ENCODE measurements at regions of chr17 and their contacts with region 1.

Region 1: DNA sequence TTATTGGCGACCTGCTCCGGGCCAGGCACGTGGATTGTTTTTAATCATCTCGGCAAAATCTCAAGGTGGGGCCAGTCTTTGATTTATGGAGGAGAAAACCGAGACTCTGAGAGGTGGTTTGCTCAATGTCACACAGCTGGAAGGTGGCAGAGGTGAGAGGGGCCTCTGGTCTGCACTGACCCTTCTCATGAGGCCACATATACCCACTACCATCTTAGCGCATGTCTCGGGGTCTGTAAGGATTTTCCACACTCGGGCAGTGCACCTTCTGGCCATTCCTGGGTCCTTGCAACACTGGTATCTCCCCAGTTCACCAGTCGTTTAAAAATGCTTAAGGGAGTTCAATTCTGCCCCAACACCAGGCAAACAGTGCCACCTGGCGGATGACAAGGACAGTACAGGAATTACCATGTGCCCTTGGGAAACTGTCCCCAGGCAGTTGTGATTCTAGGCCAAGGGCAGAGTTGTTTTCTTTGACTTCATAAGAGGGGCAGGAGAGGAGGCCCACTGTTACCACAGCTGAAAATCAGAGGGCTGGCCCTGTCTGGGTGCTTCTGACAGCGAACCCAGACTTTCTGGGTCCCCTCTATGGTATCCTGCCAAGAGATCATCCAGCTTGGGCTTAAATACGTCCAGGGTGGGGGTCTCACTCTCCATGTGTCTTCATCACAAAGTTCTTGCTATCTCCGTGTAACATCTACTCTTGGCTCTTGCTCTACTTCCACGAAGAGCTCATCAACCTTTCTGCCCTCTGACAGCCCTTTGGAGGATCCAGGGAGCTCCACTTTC is 39.4 kb upstream of the RAI1 start:
- DNase-seq: peak; percentile 67
- ATAC-seq: peak; percentile 94
- H3K4me3 Mint-ChIP-seq: no peak overlapping the region
- H3K27ac Mint-ChIP-seq: no peak overlapping the region
- H3K4me1 Mint-ChIP-seq: no peaks in the 10 kb centered on the region
- H3K27me3 Mint-ChIP-seq: peaks cover 4% of the 10 kb centered on the region
- CTCF ChIP-seq: peak; percentile 70

Region 2: GRCh38 chr17:17001874-17002520 is 639.8 kb before region 1 on chr17:
- CTCF ChIA-PET with region 1: no interaction called
- POLR2A ChIA-PET with region 1: no interaction called
- intact Hi-C with region 1: loop called (anchors 5 kb)
- DNase-seq: peak; percentile 76
- ATAC-seq: peak; percentile 97
- H3K4me3 Mint-ChIP-seq: no peak overlapping the region
- H3K27ac Mint-ChIP-seq: no peak overlapping the region
- H3K4me1 Mint-ChIP-seq: peaks cover 4% of the 10 kb centered on the region
- H3K27me3 Mint-ChIP-seq: no peaks in the 10 kb centered on the region
- CTCF ChIP-seq: peak; percentile 92

Region 3: GRCh38 chr17:17440010-17440843 is 201.6 kb before region 1 on chr17:
- CTCF ChIA-PET with region 1: no interaction called
- POLR2A ChIA-PET with region 1: no interaction called
- intact Hi-C with region 1: loop called (anchors 1 kb)
- DNase-seq: peak; percentile 57
- ATAC-seq: peak; percentile 86
- H3K4me3 Mint-ChIP-seq: no peak overlapping the region
- H3K27ac Mint-ChIP-seq: no peak overlapping the region
- H3K4me1 Mint-ChIP-seq: no peaks in the 10 kb centered on the region
- H3K27me3 Mint-ChIP-seq: peaks cover 4% of the 10 kb centered on the region
- CTCF ChIP-seq: no peak

Region 4: DNA sequence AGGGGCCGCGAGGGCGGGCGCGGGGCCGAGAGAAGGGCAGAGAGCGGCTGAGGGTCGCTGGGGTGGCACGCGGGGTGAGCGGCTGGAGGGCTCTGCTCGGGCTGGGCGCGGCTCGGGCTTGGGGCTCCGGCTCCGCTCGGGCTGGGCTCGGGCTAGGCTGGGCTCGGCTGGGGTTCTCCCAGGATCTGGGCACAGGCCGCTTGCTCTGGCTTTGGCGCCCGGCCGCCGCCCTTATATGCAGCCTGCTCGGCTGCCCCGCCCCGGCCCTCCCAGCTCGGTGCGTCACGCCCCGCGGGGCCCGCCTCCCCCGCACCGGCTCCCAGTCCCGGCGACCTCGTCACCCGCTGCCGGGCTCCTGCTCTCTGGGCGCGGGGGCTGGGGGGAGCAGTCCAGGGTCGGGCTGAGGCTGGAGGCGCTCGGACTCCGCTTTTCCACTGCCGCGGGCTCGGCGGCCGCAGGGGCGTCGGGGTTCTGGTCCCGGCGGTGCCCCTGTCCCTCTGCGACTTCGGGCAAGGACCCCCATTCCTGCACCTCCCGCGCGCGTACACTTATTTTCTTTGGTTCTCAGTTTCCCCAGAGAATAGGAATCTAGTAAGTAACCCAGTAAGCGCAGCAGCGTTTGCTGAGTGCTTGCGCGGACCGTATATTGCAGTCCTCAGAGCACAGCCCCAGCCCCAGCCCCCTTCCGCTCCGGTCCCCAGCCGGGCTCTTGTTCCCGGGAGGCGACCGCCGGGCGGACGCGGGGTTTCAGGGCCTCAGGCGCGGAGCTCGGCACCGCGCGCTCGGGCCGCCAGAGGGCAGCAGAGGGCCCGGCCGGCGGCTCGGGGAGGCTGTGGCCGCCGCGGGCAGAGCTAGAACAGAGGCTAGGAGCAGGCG is 145.4 kb before region 1 on chr17 and contains the start of gene RASD1:
- CTCF ChIA-PET with region 1: interaction called, 65 read pairs
- POLR2A ChIA-PET with region 1: no interaction called
- intact Hi-C with region 1: loop called (anchors 1 kb)
- DNase-seq: peak; percentile 81
- ATAC-seq: peak; percentile 88
- H3K4me3 Mint-ChIP-seq: peak within 1 kb of the TSS; percentile 80
- H3K27ac Mint-ChIP-seq: no peak within 1 kb of the TSS
- H3K4me1 Mint-ChIP-seq: peaks cover 17% of the 10 kb centered on the region
- H3K27me3 Mint-ChIP-seq: peaks cover 8% of the 10 kb centered on the region
- CTCF ChIP-seq: peak; percentile 67
- total RNA-seq, gene RASD1: 0.86 and 1.0 TPM in 2 replicates

Region 5: DNA sequence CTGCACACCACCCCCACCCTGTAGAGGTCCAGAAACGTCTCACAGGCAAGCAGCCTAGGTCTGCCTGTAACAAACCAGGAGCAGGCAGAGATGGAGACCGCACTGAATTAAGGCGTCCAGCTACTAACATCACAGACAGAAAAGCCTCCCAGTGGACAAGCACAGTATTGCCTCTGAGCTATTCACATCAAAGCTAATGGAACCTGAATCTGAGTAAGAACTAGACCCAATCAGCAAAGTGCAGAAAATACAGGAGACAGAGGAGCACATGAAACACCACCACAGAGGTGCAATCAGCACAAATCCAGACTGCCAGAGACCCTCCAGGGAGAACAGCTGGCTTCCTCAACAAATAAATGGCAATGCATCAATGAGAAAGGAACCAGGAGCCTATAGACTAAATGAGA is 28.1 kb before region 1 on chr17:
- CTCF ChIA-PET with region 1: interaction called, 12 read pairs
- POLR2A ChIA-PET with region 1: no interaction called
- intact Hi-C with region 1: no loop called
- DNase-seq: no peak
- ATAC-seq: peak; percentile 91
- H3K4me3 Mint-ChIP-seq: no peak overlapping the region
- H3K27ac Mint-ChIP-seq: no peak overlapping the region
- H3K4me1 Mint-ChIP-seq: peaks cover 2% of the 10 kb centered on the region
- H3K27me3 Mint-ChIP-seq: peaks cover 3% of the 10 kb centered on the region
- CTCF ChIP-seq: no peak

Region 6: DNA sequence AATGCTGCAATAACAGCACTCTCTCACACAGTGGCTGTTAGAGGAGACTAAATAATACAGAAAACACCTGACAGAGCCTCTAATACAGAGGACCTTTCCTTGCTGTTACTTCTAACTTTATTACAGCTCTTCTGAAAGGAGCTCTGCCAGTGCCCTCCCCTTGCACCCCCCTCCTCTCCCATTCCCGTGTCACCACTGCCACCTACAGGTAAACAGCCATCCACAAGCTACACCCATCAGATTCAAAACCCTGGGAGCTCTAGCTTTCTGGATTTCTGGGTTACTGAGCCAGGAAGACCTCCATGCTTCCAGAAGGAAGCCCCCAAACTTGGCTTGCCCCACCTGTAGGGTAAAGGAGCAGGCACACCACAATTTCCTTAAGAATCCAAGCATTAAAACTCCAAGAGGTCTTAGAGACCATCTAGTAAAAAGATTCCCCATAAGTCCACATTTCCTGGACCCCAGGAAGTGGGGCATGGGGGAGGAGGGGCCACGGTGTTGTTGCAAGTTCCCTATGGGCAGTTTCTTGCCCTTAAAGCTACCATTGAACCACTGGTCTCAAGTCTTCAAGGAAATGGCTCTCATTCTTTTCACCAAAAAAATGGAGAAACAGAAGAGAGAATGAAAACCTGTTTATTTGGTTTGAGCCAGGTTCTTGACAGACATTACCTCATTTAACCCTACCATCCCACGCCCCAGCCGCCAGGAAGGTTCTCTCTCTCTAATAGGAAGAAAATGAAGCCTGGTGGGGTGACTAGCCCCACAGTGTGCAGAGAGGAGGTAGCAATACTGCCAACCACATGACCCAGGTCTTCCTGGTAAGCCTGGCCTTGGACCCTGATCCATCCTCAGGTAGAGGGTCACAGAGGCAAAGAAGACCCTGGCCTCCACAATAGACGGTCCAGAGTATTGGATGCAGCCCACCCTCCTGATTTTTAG is 277.6 kb after region 1 on chr17:
- CTCF ChIA-PET with region 1: interaction called, 8 read pairs
- POLR2A ChIA-PET with region 1: no interaction called
- intact Hi-C with region 1: loop called (anchors 5 kb)
- DNase-seq: peak; percentile 29
- ATAC-seq: peak; percentile 84
- H3K4me3 Mint-ChIP-seq: no peak overlapping the region
- H3K27ac Mint-ChIP-seq: no peak overlapping the region
- H3K4me1 Mint-ChIP-seq: no peaks in the 10 kb centered on the region
- H3K27me3 Mint-ChIP-seq: no peaks in the 10 kb centered on the region
- CTCF ChIP-seq: no peak

Measured in activated B cell treated with CpG ODN at 0.5 μM for 24 hours (primary cell).